ENCODE measurements at regions of chr7 and their contacts with region 1.

Region 1: DNA sequence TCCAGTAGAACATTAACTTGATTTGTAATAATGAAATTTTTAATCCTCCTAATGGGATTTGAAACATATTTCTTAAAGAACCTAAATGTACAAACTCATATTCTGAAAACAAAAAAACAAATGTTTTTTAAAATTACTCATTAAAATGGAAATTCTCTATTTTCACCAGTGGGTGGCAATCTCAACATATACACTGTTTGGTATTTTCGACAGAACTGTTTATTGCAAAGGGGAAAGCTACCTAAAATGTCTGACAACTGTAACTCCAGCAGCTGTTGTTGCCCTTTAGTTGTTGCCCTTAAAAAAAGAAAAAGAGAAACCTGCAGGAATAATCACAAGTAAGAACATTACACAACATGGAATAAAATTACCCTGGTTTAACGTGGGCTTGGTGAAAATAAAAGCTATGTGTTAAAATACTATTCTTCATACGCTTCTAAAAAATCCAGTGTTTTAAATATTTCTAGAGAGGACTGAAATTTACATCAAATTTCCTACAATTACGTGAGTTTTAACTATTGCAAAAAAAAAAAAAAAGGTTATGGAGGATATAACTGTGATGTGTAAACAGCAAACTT is 54.5 kb downstream of the COL1A2 start:
- DNase-seq: no peak
- H3K4me3 Mint-ChIP-seq: no peak overlapping the region
- H3K27ac Mint-ChIP-seq: no peak overlapping the region
- H3K4me1 Mint-ChIP-seq: no peaks in the 10 kb centered on the region
- H3K27me3 Mint-ChIP-seq: peaks cover 3% of the 10 kb centered on the region

Region 2: DNA sequence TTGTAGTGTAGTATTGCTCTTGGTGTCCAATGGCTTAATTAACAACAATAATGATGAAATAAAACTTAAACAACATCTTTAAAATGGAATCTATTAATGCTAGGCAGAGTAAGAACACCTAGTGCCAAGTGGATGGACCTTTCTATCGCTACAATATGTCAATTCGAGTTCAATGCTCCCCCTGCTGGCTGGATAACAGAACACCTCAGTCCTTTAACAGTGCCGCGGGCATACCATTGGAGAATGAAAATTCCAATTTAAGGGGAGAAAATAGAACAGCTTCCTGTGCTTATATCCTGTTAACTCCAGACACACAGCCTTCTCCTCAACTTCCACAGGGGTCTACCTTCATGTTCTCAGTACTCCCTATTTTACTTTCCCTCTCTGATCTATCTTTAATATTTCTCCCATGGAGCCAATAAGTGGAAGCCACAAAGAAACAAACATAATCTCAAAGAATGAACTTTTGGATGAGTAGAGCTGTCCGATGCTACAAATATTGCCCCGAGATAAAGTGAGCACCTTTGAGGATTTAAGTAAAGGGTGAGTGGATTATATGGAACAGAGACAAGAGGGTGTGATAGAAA is 13.1 kb before region 1 on chr7:
- CTCF ChIA-PET with region 1: interaction called, 11 read pairs
- DNase-seq: peak; percentile 62
- H3K4me3 Mint-ChIP-seq: no peak overlapping the region
- H3K27ac Mint-ChIP-seq: no peak overlapping the region
- H3K4me1 Mint-ChIP-seq: no peaks in the 10 kb centered on the region
- H3K27me3 Mint-ChIP-seq: no peaks in the 10 kb centered on the region

Region 3: GRCh38 chr7:95246831-95247370 is 797.7 kb after region 1 on chr7:
- CTCF ChIA-PET with region 1: interaction called, 11 read pairs
- DNase-seq: peak; percentile 33
- H3K4me3 Mint-ChIP-seq: no peak overlapping the region
- H3K27ac Mint-ChIP-seq: no peak overlapping the region
- H3K4me1 Mint-ChIP-seq: no peaks in the 10 kb centered on the region
- H3K27me3 Mint-ChIP-seq: peaks cover 4% of the 10 kb centered on the region

Measured in activated naive CD4-positive, alpha-beta T cell treated with anti-CD3 and anti-CD28 coated beads, Interleukin-2, amount 10 ng/mL, durations not matched to agents 7 days and 5 days (primary cell).